Right ventricle myocardium inferior (tissue), 1 donor: ENCODE measurements at regions of chr1 and their contacts with region 1.

Region 1: GRCh38 chr1:16243936-16244649 is 7.1 kb upstream of the CPLANE2 start:
- DNase-seq: peak; percentile 81
- ATAC-seq: peak; percentile 21

Region 2: DNA sequence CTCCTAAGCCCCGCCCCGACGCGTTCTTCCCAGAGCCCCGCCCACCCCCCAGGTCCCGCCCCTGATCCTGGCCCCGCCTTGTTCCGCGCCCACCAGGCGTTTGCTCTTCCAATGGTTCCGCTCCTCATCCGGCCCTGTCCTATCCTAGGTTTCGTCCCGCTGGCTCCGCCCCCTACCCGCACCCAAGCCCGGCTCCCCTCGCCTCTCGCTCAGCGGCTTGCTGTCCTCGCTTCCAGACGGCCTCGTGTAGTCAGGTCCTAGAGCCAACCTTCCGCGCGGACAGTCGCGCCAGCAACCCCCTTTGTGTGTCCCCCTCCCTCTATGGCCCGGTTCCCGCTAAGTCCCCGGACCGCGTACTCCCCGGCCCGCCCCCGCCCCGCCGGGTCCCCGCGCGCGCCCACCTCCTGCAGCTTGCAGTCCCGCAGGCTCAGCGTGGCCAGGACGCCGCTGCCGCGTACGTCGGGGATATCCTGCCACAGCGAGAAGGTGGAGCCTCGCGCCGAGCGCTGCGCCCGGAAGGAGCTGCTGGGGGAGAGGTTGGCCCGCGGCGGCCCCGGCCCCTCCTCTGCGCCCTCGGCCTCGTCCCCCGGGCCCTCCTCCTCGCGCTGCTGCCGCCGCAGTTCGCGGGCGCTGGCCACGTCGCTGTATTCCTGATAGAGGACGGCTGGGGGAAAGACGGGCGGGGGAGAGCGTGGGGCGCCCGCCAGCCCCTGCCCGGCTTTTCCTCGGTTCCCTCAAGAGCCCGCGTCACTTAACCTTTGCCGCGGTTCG is 37.4 kb before region 1 on chr1:
- intact Hi-C with region 1: loop called (anchors 5 kb)
- DNase-seq: peak; percentile 99
- ATAC-seq: peak; percentile 96

Region 3: GRCh38 chr1:16351994-16352841 is 108.1 kb after region 1 on chr1 and contains the start of gene FBXO42:
- intact Hi-C with region 1: loop called (anchors 2 kb)
- DNase-seq: peak; percentile 96
- ATAC-seq: peak; percentile 96
- total RNA-seq, gene FBXO42: 21.9 TPM